ENCODE measurements at regions of chr18 and their contacts with region 1.

Region 1: DNA sequence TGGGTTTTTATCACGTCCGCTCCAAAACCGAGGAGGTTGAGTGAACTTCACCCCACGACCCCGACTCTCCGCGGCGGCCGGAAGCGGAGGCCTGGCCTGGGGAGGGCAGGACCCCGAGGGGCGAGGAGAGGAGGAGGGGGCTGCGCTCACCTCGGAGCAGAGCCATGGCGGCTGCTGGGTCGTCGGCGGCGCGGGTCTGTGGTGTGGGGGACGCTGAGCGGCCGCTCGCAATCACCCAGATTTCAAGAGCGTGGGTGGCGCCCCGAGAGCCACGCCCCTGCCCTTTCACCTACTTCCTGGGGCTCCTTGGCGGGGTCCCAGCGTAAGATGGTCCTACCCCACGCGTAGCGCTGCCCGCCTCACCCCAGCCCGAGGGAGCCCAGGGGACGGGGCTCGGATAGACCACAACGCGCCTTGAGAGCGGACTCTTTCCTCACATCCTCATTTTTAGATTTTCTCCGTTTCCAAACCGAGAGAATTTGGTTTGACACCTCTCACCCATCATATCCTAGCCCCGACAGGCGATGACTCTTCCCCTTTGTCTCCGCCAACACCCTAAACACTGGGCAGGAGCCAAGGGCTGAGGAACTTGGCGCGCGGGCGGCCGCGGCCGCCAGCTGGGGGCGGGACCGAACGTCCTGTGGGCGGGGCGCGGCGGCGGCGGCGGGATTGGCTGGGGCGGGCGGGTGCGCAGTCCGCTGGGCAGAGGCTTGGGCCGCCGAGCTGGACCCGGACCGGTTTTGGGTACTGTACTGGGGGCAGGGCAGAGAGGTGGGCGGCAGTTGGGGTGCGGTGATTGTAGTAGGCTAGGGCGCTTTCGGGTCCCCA is at the start of gene ACAA2:
- DNase-seq: peak; percentile 92
- ATAC-seq: peak; percentile 93
- H3K4me3 Mint-ChIP-seq: peak within 1 kb of the TSS; percentile 93
- H3K27ac Mint-ChIP-seq: peak within 1 kb of the TSS; percentile 98
- H3K4me1 Mint-ChIP-seq: peaks cover 47% of the 10 kb centered on the region
- H3K27me3 Mint-ChIP-seq: no peaks in the 10 kb centered on the region
- total RNA-seq, gene ACAA2: 63.4 to 75.2 TPM

Region 2: GRCh38 chr18:49169037-49169521 is 644.5 kb before region 1 on chr18:
- CTCF ChIA-PET with region 1: no interaction called
- POLR2A ChIA-PET with region 1: no interaction called
- intact Hi-C with region 1: loop called in 1 of 2 experiments (anchors 10 kb)
- DNase-seq: peak; percentile 58
- ATAC-seq: peak; percentile 86
- H3K4me3 Mint-ChIP-seq: peak overlapping the region; percentile 4
- H3K27ac Mint-ChIP-seq: no peak overlapping the region
- H3K4me1 Mint-ChIP-seq: peaks cover 29% of the 10 kb centered on the region
- H3K27me3 Mint-ChIP-seq: no peaks in the 10 kb centered on the region

Region 3: GRCh38 chr18:49486953-49487710 is 326.4 kb before region 1 on chr18 and contains the start of gene C18orf32:
- CTCF ChIA-PET with region 1: no interaction called
- POLR2A ChIA-PET with region 1: no interaction called
- intact Hi-C with region 1: loop called (anchors 1 to 2 kb)
- DNase-seq: peak; percentile 96
- ATAC-seq: peak; percentile 92
- H3K4me3 Mint-ChIP-seq: peak within 1 kb of the TSS; percentile 95
- H3K27ac Mint-ChIP-seq: peak within 1 kb of the TSS; percentile 100
- H3K4me1 Mint-ChIP-seq: peaks cover 60% of the 10 kb centered on the region
- H3K27me3 Mint-ChIP-seq: no peaks in the 10 kb centered on the region
- total RNA-seq, gene C18orf32: 12.7 to 20.0 TPM

Region 4: DNA sequence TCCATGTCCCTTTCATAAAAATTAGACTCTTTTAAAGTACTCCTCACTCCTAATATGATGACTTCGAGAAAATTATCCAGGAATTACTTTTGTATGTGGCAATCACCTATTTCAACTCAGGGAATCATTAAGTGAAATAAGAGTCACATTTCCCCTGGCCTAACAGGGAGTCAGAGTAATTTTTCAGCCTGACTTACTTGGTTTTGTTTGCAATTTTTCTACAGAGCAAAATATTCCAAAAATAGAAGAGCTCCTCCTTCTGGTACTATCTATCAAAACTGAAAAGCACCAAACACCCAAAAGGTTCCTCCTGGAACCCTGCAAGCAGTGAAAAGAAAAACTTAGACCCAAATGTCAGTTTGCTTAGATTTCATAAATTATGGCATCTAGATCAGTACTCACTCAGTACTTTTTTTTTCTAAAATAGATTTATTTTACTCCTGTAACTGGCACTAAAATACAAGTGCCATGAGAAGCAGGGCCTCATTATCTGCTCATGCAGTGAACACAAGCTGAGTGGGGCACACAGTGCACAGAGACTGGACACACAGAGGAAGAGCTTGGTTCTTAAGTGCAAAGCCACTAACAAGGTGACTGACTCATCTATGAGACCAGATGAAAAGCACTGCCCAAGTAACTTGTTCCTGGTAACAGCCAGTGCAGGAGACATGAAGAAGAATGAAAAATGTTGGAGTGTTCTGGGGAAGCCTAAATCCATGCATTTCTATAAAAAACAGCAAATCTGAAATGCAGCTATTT is 28.9 kb before region 1 on chr18:
- CTCF ChIA-PET with region 1: no interaction called
- POLR2A ChIA-PET with region 1: no interaction called
- intact Hi-C with region 1: loop called in 1 of 2 experiments (anchors 2 kb)
- DNase-seq: no peak
- ATAC-seq: no peak
- H3K4me3 Mint-ChIP-seq: no peak overlapping the region
- H3K27ac Mint-ChIP-seq: no peak overlapping the region
- H3K4me1 Mint-ChIP-seq: peaks cover 40% of the 10 kb centered on the region
- H3K27me3 Mint-ChIP-seq: no peaks in the 10 kb centered on the region

Region 5: DNA sequence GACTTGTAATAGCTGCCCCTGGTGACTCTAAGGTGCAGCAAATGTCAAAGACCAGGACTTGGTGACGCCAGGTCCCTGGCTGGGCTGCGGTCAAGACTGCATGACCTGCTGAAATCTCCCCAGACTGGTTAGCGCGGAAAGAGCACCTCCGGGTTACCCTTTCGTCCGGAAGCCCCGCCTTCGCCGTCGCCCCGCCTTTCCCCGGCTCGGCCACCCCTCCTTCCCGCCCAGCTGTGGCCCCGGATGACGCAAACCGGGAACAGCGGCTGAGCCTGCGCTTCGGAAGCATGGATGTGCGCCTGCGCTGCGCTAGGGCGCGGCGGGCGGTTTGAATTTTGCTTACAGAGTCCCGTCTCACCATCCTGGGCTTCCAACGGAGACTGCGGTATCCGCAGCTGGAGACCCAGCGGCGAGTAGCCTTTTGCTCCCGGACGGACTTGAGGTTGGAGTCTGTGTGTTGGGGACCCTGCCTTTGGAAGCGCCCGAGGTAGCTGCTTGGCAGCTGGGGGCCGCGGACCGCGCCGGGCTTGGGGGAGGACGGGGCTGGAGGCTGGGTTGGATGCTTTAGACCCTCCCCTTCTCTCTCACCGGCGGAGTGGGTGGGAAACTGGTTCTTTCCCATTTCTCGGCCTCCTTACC is 561.3 kb after region 1 on chr18 and contains the start of gene SKA1:
- CTCF ChIA-PET with region 1: no interaction called
- POLR2A ChIA-PET with region 1: no interaction called
- intact Hi-C with region 1: loop called (anchors 2 to 10 kb)
- DNase-seq: peak; percentile 96
- ATAC-seq: peak; percentile 99
- H3K4me3 Mint-ChIP-seq: peak within 1 kb of the TSS; percentile 83
- H3K27ac Mint-ChIP-seq: peak within 1 kb of the TSS; percentile 79
- H3K4me1 Mint-ChIP-seq: peaks cover 2% of the 10 kb centered on the region
- H3K27me3 Mint-ChIP-seq: peaks cover under 1% of the 10 kb centered on the region
- total RNA-seq, gene SKA1: 38.6 to 48.3 TPM